Calu3 (cell line): ENCODE measurements at regions of chr20 and their contacts with region 1.

Region 1: GRCh38 chr20:10708351-10709185 is 34.8 kb upstream of the JAG1 start:
- DNase-seq: no peak
- H3K4me3 Mint-ChIP-seq: peak overlapping the region; percentile 43
- H3K27ac Mint-ChIP-seq: peak overlapping the region; percentile 96
- H3K4me1 Mint-ChIP-seq: peaks cover 53% of the 10 kb centered on the region
- H3K27me3 Mint-ChIP-seq: no peaks in the 10 kb centered on the region
- CTCF ChIP-seq: no peak

Region 2: GRCh38 chr20:10696650-10697049 is 11.9 kb before region 1 on chr20:
- CTCF ChIA-PET with region 1: no interaction called
- intact Hi-C with region 1: no loop called
- DNase-seq: no peak
- H3K4me3 Mint-ChIP-seq: no peak overlapping the region
- H3K27ac Mint-ChIP-seq: no peak overlapping the region
- H3K4me1 Mint-ChIP-seq: peaks cover 18% of the 10 kb centered on the region
- H3K27me3 Mint-ChIP-seq: no peaks in the 10 kb centered on the region
- CTCF ChIP-seq: peak; percentile 45

Region 3: DNA sequence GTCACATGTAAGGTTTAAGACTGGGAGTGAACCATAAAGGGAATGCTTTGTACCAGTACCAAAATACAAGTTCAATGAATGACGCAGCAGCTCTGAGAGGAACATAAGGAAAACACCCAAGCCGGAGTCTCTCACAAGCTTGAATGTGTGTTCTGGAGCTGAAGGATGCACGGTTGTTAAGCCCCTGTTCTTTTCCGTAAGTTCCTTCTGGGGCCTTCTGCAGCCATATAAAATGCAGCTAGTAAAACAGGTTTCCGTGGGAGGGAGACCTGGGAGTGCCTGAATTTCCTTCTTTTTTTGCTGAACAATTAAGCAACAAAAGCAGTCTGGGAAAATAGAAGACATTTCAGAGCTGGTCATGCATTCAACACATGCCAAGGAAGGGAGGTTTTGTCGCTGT is 38.5 kb after region 1 on chr20:
- CTCF ChIA-PET with region 1: no interaction called
- intact Hi-C with region 1: no loop called
- DNase-seq: no peak
- H3K4me3 Mint-ChIP-seq: no peak overlapping the region
- H3K27ac Mint-ChIP-seq: no peak overlapping the region
- H3K4me1 Mint-ChIP-seq: no peaks in the 10 kb centered on the region
- H3K27me3 Mint-ChIP-seq: no peaks in the 10 kb centered on the region
- CTCF ChIP-seq: no peak

Region 4: DNA sequence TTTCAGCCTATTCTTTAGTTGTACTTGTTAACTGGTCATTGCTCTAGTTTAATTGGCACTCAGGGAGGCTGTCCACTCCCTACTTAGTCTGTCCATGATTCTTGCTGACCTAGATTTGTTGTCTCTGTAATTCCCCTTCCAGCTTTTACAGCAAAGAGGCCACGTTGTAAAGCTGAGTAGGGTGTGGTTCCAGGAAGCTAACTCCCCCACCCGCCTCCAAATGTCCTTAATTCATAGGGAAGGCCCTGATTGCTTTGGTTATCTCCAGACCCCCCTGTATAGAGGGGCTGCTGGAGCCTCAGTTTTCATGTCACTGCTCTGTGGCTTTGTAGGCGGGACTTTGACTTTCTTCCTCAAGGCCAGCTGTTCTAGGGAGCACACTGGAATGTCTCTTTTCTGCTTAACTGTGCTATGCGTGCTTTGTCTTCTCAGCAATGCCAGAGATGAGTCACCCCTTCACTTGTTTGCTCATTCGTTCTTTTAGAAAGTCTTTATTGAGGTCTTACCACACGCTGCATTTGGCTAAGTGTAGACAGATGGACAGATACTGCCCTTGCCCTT is 140.3 kb after region 1 on chr20:
- CTCF ChIA-PET with region 1: no interaction called
- intact Hi-C with region 1: no loop called
- DNase-seq: peak; percentile 18
- H3K4me3 Mint-ChIP-seq: no peak overlapping the region
- H3K27ac Mint-ChIP-seq: no peak overlapping the region
- H3K4me1 Mint-ChIP-seq: peaks cover 25% of the 10 kb centered on the region
- H3K27me3 Mint-ChIP-seq: no peaks in the 10 kb centered on the region
- CTCF ChIP-seq: no peak

Region 5: GRCh38 chr20:10954137-10954840 is 245.7 kb after region 1 on chr20:
- CTCF ChIA-PET with region 1: no interaction called
- intact Hi-C with region 1: loop called (anchors 1 kb)
- DNase-seq: peak; percentile 53
- H3K4me3 Mint-ChIP-seq: no peak overlapping the region
- H3K27ac Mint-ChIP-seq: no peak overlapping the region
- H3K4me1 Mint-ChIP-seq: peaks cover 28% of the 10 kb centered on the region
- H3K27me3 Mint-ChIP-seq: no peaks in the 10 kb centered on the region
- CTCF ChIP-seq: no peak

Region 6: DNA sequence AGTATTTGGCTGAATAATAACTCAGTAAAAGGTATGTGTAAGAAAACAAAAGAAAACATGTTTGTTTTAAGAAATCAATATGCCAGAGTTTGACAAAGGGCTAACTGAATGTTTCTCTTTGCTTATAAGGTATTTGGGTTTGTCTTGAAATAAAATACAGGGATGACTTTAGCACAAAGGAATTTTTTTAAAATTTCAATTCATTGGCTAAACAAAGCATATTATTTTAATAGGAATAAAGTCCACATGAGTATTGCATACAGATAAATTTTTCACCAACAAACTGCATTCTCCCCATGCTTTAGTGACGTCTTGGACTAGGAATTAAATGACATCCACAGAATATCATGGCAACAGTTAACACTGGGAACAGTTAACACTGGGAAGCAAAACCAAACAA is 445.3 kb after region 1 on chr20:
- CTCF ChIA-PET with region 1: no interaction called
- intact Hi-C with region 1: loop called (anchors 5 kb)
- DNase-seq: no peak
- H3K4me3 Mint-ChIP-seq: no peak overlapping the region
- H3K27ac Mint-ChIP-seq: peak overlapping the region; percentile 85
- H3K4me1 Mint-ChIP-seq: peaks cover 29% of the 10 kb centered on the region
- H3K27me3 Mint-ChIP-seq: no peaks in the 10 kb centered on the region
- CTCF ChIP-seq: no peak

Region 7: GRCh38 chr20:11267131-11267761 is 558.7 kb after region 1 on chr20:
- CTCF ChIA-PET with region 1: no interaction called
- intact Hi-C with region 1: loop called (anchors 2 kb)
- DNase-seq: peak; percentile 52
- H3K4me3 Mint-ChIP-seq: peak overlapping the region; percentile 31
- H3K27ac Mint-ChIP-seq: peak overlapping the region; percentile 59
- H3K4me1 Mint-ChIP-seq: peaks cover 61% of the 10 kb centered on the region
- H3K27me3 Mint-ChIP-seq: no peaks in the 10 kb centered on the region
- CTCF ChIP-seq: no peak